ENCODE measurements at regions of chr12 and their contacts with region 1.

Region 1: DNA sequence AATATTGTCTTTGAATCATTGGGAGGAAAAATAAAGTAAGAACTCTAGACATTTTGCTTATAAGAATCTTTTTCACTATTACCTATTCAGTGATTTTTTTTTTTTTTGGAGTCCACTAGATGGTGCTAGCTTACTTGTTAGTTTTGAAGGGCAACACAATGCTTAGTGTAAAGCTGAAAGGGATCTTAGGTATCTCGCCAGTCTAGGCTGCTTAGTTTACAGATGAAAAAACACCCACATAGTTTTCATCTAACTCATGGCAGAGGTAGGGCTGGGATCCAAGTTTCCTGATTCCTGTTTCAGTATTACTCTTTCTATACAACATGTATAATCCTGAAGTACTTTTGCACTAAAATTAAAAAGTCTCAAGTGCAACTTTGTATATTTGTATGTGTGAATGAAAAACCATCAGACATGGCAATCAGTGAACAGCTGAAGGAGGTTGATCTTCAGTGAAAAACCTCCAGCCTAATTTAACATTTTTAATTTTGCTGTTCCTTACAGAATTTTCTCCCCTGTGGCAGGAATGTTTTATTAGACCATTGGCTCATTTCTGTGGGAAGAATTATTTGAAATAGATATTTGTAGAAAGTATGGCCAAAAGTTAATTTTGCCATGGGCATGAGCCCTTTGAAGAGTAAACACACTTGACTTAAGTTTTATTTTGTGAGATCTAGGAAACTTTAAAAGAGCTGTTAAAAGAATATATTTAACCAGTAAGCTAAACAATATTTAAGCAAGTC is 40.7 kb downstream of the LRRIQ1 start:
- DNase-seq: peak; percentile 87
- H3K4me3 Mint-ChIP-seq: no peak overlapping the region
- H3K27ac Mint-ChIP-seq: peak overlapping the region; percentile 30
- H3K4me1 Mint-ChIP-seq: no peaks in the 10 kb centered on the region
- H3K27me3 Mint-ChIP-seq: no peaks in the 10 kb centered on the region
- CTCF ChIP-seq: peak; percentile 45

Region 2: DNA sequence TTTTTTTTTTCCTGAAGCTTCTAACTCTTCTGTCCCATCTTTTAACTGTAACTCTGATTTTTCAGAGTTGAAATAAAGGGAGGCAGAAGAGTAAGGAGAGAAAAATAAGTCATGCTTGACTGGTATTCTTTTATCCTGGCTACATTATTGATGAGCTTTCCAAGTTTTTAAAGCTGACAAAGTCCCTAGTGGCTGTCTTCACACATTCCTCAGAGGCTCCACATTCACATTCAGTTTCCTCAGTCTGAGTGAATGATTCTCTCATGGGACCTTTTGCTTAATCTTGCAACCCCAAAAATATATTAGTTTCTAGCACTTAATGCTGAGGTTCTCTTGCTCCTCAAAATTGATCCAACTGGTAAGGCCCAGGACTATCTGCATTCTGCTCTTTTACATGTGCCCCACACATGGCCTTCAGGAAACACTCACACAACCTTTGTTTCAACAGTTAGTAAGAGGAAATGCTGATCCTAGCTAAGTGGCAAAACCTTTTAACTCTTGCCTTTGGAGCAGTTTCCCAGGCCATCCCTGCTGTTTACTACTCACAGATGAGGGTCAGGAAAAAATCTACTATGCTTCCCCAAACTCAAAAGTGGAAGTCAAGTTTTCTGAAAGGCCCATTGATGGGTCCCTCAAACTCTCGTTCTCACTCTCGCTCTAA is 102.6 kb before region 1 on chr12:
- CTCF ChIA-PET with region 1: no interaction called
- POLR2A ChIA-PET with region 1: no interaction called
- intact Hi-C with region 1: no loop called
- DNase-seq: no peak
- H3K4me3 Mint-ChIP-seq: no peak overlapping the region
- H3K27ac Mint-ChIP-seq: no peak overlapping the region
- H3K4me1 Mint-ChIP-seq: no peaks in the 10 kb centered on the region
- H3K27me3 Mint-ChIP-seq: no peaks in the 10 kb centered on the region
- CTCF ChIP-seq: no peak

Region 3: DNA sequence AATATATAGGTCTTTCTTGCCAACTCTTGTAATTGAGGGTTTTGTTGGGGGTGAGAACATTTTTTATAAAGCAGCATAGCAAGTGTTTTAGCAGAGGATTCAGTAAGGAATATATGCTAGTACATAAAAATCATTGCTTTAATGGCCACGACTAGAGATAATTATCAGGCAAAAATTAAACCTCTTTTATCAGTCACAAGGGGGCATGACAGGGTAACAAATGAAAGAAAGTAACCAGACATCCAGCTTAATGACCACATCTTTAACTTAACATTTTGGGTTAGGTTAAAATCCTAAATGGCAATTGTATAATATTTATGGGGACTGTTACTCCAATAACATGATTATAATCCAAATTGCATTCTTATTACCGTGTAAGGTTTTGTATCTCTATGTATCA is 78.9 kb after region 1 on chr12:
- CTCF ChIA-PET with region 1: no interaction called
- POLR2A ChIA-PET with region 1: interaction called, 3 read pairs
- intact Hi-C with region 1: loop called (anchors 5 kb)
- DNase-seq: peak; percentile 60
- H3K4me3 Mint-ChIP-seq: no peak overlapping the region
- H3K27ac Mint-ChIP-seq: no peak overlapping the region
- H3K4me1 Mint-ChIP-seq: no peaks in the 10 kb centered on the region
- H3K27me3 Mint-ChIP-seq: no peaks in the 10 kb centered on the region
- CTCF ChIP-seq: peak; percentile 37

Region 4: DNA sequence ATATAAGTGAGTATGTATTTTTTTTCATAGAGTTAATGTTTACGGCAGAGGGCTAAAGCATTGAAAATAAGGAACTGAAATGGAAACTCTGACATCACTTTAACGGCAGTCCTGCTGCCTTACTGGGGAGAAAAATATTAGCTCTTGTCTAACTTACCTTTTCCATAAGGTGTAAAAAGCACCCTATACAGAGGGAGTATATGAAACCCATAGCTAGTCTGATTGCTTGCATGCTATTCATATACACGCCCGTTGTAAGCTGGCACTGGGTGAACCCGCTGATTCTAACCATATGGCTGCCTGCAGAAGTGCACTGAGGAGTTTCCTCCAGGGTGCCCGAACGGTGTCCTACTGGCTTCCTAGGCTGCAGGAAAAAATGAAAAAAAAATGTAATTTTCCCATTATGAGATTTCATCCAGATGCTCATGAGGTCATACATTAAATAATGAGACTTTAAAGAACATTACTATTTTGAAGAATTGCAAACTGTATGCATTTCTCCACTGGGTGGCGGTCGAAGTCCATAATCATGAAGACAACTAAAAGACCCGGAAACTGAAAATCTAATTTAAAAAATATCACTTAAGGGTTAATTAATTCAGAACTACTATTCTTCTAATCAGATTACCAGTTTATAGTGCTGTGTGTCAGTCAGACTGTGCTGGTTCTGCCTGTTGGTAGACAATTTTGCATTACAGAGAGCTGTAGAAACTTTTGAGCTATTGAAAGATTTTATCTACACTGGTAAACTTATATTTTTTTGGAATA is 347.9 kb after region 1 on chr12:
- CTCF ChIA-PET with region 1: interaction called, 12 read pairs
- POLR2A ChIA-PET with region 1: no interaction called
- intact Hi-C with region 1: no loop called
- DNase-seq: peak; percentile 50
- H3K4me3 Mint-ChIP-seq: no peak overlapping the region
- H3K27ac Mint-ChIP-seq: no peak overlapping the region
- H3K4me1 Mint-ChIP-seq: no peaks in the 10 kb centered on the region
- H3K27me3 Mint-ChIP-seq: no peaks in the 10 kb centered on the region
- CTCF ChIP-seq: peak; percentile 31

Region 5: DNA sequence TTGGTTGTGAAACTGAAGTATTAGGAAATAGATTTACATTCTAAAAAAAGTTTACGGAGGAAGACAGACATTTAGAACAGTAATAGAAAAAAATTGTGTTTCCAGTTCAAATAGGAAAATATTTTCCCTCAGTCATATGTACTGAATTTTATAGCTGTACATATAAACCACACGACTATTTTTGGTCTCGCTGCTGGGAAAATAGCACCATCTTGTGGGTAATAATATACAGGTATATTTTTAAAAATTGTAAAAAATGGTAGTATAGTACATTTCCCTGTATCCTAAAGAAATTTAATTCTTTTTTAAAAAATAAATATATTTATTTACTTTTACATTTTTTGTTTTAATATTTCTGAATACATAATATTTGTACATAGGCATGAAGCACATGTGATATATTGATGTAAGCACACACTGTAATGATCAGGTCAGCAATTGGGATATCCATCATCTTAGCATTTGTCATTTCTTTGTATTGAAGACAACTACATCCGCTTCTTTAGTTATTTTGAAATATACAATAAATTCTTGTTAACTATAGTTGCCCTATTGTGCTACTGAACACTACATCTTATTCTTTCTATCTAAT is 371.8 kb after region 1 on chr12:
- CTCF ChIA-PET with region 1: interaction called, 8 read pairs
- POLR2A ChIA-PET with region 1: no interaction called
- intact Hi-C with region 1: loop called (anchors 1 kb)
- DNase-seq: peak; percentile 32
- H3K4me3 Mint-ChIP-seq: no peak overlapping the region
- H3K27ac Mint-ChIP-seq: no peak overlapping the region
- H3K4me1 Mint-ChIP-seq: peaks cover 6% of the 10 kb centered on the region
- H3K27me3 Mint-ChIP-seq: no peaks in the 10 kb centered on the region
- CTCF ChIP-seq: peak; percentile 43